Dendritic cell treated with granulocyte-macrophage colony-stimulating factor and Interleukin-4, amounts not matched to agents 40 ng/mL and 50 ng/mL, for 4 days (primary cell): ENCODE measurements at regions of chr7 and their contacts with region 1.

Region 1: DNA sequence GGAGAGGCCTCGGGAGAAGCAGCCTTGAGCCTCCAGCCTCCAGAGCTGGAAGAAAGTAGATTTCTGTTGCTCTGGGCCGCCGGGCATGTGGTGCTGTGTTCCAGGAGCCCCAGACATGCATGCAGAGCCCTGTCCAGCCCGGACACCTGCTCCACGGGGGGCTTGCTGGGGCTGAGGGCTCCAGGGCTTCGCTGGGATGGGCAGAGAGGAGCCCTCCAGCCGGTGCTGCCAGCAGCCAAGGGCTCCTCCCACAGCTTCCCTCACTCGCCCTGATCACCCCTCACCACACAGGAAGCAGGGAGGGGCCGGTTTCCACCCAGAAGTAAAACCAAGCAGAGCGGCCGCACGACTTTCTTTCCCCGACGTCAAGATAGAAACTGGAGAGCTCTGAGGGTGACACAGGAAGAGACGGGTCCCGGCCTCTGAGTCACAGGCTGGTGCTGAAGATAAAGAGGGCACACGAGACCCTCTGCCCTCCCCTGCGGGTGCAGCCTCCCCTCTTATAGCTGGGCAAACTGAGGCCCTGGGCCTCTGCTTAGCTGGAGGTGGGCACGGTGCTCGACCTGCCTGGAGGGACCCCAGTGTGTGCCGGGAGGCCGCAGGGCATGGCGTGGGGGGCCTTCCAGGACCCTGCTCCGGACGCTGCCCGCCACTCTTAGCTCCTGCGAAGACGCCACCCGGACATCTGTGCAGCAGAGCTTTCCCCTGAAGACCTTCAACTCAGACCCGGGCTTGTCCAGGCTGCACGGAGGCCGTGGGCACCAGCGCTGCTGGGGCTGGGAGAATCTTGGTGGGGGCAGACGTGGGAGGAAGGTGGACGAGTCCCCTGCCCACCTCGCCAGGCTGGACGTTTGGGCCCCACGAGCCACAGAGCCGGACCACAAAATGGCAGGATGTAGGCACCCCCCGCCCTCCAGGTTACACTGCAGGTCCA is 31.1 kb downstream of the ADAP1 start:
- H3K4me3 Mint-ChIP-seq: peak overlapping the region; percentile 51
- H3K27ac Mint-ChIP-seq: peak overlapping the region; percentile 79
- H3K4me1 Mint-ChIP-seq: peaks cover 86% of the 10 kb centered on the region
- H3K27me3 Mint-ChIP-seq: peaks cover 3% of the 10 kb centered on the region

Region 2: DNA sequence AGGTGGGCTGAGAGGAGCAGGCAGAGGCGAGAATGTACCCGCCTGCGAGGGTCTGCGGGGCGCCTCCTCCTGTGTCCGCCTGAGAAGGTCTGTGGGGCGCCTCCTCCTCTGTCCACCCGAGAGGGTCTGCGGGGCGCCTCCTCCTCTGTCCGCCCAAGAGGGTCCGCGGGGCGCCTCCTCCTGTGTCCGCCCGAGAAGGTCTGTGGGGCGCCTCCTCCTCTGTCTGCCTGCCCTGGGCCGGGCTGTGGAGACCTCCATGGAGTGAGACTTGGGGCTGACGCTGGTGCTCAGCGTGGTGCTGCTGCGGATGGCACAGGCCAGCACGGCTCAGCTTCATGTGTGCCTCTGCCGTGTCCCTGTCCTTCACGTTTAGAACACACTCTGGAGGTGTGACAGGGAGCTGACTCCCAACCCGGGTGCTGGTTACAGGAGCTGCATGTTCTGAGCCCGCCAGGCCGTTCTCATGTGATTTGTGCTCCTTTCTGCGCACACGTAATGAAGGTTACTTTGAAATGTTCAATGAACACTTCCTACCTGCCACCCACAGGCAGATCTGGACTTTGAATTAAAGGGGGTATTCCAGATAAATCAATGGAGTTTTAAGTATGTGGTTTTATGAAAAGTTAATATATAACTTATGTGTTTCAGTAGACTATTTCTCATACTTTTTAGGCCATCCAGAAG is 67.5 kb before region 1 on chr7:
- intact Hi-C with region 1: no loop called
- H3K4me3 Mint-ChIP-seq: no peak overlapping the region
- H3K27ac Mint-ChIP-seq: no peak overlapping the region
- H3K4me1 Mint-ChIP-seq: no peaks in the 10 kb centered on the region
- H3K27me3 Mint-ChIP-seq: no peaks in the 10 kb centered on the region

Region 3: GRCh38 chr7:909358-910329 is 13.7 kb before region 1 on chr7:
- intact Hi-C with region 1: loop called (anchors 1 kb)
- H3K4me3 Mint-ChIP-seq: peak overlapping the region; percentile 55
- H3K27ac Mint-ChIP-seq: peak overlapping the region; percentile 72
- H3K4me1 Mint-ChIP-seq: peaks cover 77% of the 10 kb centered on the region
- H3K27me3 Mint-ChIP-seq: no peaks in the 10 kb centered on the region

Region 4: GRCh38 chr7:954330-955238 is 31.2 kb after region 1 on chr7 and contains the start of gene ADAP1:
- intact Hi-C with region 1: loop called (anchors 1 kb)
- H3K4me3 Mint-ChIP-seq: peak within 1 kb of the TSS; percentile 78
- H3K27ac Mint-ChIP-seq: peak within 1 kb of the TSS; percentile 78
- H3K4me1 Mint-ChIP-seq: peaks cover 68% of the 10 kb centered on the region
- H3K27me3 Mint-ChIP-seq: peaks cover 15% of the 10 kb centered on the region

Region 5: DNA sequence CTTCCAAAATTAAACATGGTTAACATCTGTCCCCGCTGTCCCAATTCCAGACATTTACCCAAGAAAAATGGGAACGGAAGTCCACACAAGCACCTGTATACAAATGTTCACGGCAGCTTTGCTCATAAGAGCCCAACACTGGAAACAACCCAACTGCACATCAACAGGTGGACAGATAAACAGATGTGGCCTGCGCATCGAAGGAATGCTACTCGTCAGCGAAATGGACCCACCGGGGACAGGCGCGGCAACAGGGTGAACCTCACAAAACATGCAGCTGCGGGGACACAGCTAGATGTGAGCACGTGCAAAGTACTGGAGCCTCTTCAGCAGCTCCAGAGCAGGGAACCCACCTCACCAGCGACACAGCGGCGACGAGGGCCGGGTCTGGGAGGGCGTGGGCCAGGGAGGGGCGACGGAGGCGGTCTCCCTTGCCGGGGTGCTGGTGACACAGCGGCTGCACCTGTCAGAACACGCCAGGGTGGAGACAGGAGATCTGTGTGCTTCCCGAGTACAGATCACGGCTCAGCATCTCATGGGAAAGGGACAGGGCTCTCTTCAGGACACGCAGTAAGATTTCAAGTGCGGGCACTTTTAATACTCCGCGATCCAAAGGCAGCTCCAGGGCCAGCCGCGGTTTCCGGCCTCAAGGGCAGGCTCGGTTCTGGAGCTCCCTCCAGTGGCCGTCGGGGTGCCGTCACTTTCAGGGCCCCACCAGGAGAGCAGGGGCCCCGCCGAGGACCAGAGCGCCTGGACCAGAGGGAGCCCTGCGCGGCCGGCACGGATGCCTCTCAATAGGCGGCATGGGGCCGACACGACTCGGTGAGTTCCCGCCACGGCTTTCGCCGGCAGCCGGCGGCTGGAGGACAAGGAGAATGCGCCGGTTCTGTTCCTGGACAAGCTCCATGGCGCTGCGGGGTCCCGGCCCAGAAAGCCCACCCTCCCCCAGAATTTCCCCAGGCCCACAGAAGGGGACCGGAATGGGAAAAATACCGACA is 142.2 kb after region 1 on chr7:
- intact Hi-C with region 1: loop called (anchors 10 kb)
- H3K4me3 Mint-ChIP-seq: peak overlapping the region; percentile 49
- H3K27ac Mint-ChIP-seq: no peak overlapping the region
- H3K4me1 Mint-ChIP-seq: peaks cover 38% of the 10 kb centered on the region
- H3K27me3 Mint-ChIP-seq: peaks cover 64% of the 10 kb centered on the region

Region 6: DNA sequence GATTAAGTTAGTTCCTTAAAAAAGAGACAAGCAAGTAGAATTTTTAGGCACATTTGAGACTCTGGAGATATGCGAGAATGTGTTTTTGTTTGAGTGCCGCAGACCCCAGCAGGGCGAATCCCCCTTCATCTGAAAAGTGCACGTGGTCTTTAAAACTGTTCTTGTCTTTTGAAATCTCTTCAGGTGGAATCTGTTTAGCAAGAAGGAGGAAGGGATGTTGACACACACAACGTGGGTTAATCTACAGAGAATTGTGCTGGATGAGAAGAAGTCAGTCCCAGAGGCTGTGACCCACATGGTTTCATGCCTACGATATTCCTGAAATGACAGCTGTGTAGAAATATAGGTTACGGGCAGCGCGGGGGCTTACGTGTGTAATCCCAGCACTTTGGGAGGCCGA is 263.8 kb after region 1 on chr7:
- intact Hi-C with region 1: no loop called
- H3K4me3 Mint-ChIP-seq: no peak overlapping the region
- H3K27ac Mint-ChIP-seq: no peak overlapping the region
- H3K4me1 Mint-ChIP-seq: peaks cover 7% of the 10 kb centered on the region
- H3K27me3 Mint-ChIP-seq: peaks cover 18% of the 10 kb centered on the region